GM12878 (cell line): ENCODE measurements at regions of chr20 and their contacts with region 1.

Region 1: DNA sequence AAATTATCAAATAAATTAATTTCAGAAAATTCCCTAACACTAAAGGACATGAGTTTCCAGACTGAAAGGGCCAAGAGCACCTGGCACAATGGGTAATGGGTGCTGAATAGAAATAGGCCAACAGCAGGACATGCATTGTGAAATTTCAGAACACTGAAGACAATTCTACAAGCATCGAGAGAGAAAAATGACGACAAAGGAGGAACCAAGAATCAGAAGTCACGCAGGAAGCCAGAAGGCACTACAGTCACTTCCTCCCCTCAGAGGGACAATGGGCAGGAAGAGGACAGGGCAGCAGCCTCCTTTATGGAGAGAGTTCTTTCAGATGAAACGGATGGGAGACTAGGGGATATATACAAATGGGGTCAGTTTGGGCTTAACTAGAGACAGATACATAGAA is 29.6 kb downstream of the PCNA start:
- DNase-seq: no peak
- ATAC-seq: peak; percentile 93
- H3K4me3 ChIP-seq: no peak overlapping the region
- H3K27ac ChIP-seq: no peak overlapping the region
- H3K4me1 ChIP-seq: no peaks in the 10 kb centered on the region
- H3K27me3 ChIP-seq: no peaks in the 10 kb centered on the region
- CTCF ChIP-seq: no peak
- EP300 ChIP-seq: peak; percentile 64 to 72; a peak in 2 of 4 replicates
- POLR2A ChIP-seq: no peak
- RAD21 ChIP-seq: no peak

Region 2: GRCh38 chr20:5065166-5065878 is 24.9 kb before region 1 on chr20:
- CTCF ChIA-PET with region 1: no interaction called
- POLR2A ChIA-PET with region 1: interaction called, 13 read pairs
- RAD21 ChIA-PET with region 1: interaction called, 4 read pairs
- SMC1A ChIA-PET with region 1: interaction called, 5 read pairs
- in situ Hi-C with region 1: no loop called
- intact Hi-C with region 1: no loop called
- DNase-seq: no peak
- ATAC-seq: no peak
- H3K4me3 ChIP-seq: no peak overlapping the region
- H3K27ac ChIP-seq: no peak overlapping the region
- H3K4me1 ChIP-seq: no peaks in the 10 kb centered on the region
- H3K27me3 ChIP-seq: peaks cover 0 to 4% of the 10 kb centered on the region in 2 experiments; a peak in 1 of 4 replicates
- CTCF ChIP-seq: no peak
- EP300 ChIP-seq: no peak
- POLR2A ChIP-seq: no peak
- RAD21 ChIP-seq: no peak

Region 3: GRCh38 chr20:5135363-5136012 is 45.3 kb after region 1 on chr20:
- CTCF ChIA-PET with region 1: no interaction called
- POLR2A ChIA-PET with region 1: no interaction called
- RAD21 ChIA-PET with region 1: no interaction called
- SMC1A ChIA-PET with region 1: no interaction called
- in situ Hi-C with region 1: no loop called
- intact Hi-C with region 1: no loop called
- DNase-seq: peak; percentile 42
- ATAC-seq: peak; percentile 87
- H3K4me3 ChIP-seq: no peak overlapping the region
- H3K27ac ChIP-seq: no peak overlapping the region; the same call in 1 of the 2 replicates
- H3K4me1 ChIP-seq: peaks cover 2% of the 10 kb centered on the region; the same call in 1 of the 2 replicates
- H3K27me3 ChIP-seq: no peaks in the 10 kb centered on the region
- CTCF ChIP-seq: no peak
- EP300 ChIP-seq: no peak
- POLR2A ChIP-seq: no peak
- RAD21 ChIP-seq: no peak

Region 4: GRCh38 chr20:5168651-5169396 is 78.6 kb after region 1 on chr20:
- CTCF ChIA-PET with region 1: no interaction called
- POLR2A ChIA-PET with region 1: no interaction called
- RAD21 ChIA-PET with region 1: no interaction called
- SMC1A ChIA-PET with region 1: no interaction called
- in situ Hi-C with region 1: no loop called
- intact Hi-C with region 1: no loop called
- DNase-seq: no peak
- ATAC-seq: peak; percentile 7
- H3K4me3 ChIP-seq: no peak overlapping the region
- H3K27ac ChIP-seq: peak overlapping the region; percentile 27
- H3K4me1 ChIP-seq: peaks cover 56% of the 10 kb centered on the region
- H3K27me3 ChIP-seq: no peaks in the 10 kb centered on the region
- CTCF ChIP-seq: no peak
- EP300 ChIP-seq: no peak
- POLR2A ChIP-seq: no peak
- RAD21 ChIP-seq: no peak